ENCODE measurements at regions of chr1 and their contacts with region 1.

Region 1: DNA sequence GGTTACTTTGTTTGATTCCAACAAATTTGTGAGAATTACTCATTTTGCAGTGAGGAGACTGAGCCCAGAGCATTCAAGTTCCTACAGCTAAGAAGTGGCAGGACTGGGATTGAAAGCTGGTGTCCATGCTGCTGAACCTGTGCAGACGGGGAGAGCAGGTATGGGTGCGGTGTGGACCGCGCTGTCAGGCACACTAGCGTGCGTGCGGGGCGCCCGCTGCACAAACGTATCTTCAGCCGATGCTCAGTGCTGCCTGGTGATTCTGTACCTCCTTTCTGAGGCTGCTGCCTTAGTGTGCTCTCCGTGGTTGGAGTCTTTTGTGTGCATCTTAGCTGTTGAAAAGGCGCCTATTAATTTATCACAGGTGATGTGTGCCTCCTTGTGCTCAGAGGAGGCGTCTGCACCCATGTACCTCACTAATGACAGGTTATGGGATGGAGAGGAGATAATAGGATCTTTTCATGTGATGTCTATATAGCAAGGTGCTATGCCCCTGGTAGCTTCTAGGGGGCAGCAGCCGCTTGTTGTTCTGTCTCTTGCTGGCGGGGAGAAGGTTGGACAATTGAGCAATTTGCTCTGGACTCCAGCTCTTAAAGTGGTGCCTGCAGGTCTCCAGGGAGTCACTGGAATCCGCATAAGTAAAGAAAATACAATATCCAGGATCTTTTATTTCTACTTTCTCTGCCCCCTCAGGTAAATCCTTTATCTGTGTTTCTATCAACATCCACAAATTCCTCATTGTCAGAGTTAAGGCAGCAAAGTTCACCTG is 32.5 kb downstream of the PEX14 start:
- DNase-seq: peak; percentile 58
- ATAC-seq: peak; percentile 89
- H3K4me3 Mint-ChIP-seq: no peak overlapping the region
- H3K27ac Mint-ChIP-seq: peak overlapping the region; percentile 85
- H3K4me1 Mint-ChIP-seq: peaks cover 37% of the 10 kb centered on the region
- H3K27me3 Mint-ChIP-seq: no peaks in the 10 kb centered on the region
- CTCF ChIP-seq: peak; percentile 67

Region 2: DNA sequence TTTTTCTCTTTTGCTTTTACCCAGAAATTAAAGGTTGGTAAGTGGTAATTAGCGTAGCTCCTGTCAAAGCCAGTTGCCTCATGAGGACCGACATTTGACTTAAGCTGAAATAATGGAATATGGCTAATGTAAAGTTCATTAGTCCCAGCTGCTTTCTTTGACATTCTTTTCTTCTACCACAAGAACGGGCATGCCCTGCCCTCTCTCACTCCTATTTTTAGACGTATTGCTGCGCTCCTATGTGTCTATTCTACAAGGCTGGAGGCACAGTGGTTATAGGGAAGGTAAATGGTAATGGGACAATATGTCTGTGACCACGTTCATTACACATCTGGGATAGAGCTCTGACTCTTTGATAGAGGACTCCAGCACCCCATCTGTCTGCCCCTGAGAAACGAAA is 50.6 kb before region 1 on chr1:
- CTCF ChIA-PET with region 1: interaction called, 10 read pairs
- POLR2A ChIA-PET with region 1: no interaction called
- DNase-seq: no peak
- ATAC-seq: no peak
- H3K4me3 Mint-ChIP-seq: no peak overlapping the region
- H3K27ac Mint-ChIP-seq: peak overlapping the region; percentile 70
- H3K4me1 Mint-ChIP-seq: peaks cover 3% of the 10 kb centered on the region
- H3K27me3 Mint-ChIP-seq: no peaks in the 10 kb centered on the region; the same call in 1 of the 2 replicates
- CTCF ChIP-seq: no peak

Region 3: DNA sequence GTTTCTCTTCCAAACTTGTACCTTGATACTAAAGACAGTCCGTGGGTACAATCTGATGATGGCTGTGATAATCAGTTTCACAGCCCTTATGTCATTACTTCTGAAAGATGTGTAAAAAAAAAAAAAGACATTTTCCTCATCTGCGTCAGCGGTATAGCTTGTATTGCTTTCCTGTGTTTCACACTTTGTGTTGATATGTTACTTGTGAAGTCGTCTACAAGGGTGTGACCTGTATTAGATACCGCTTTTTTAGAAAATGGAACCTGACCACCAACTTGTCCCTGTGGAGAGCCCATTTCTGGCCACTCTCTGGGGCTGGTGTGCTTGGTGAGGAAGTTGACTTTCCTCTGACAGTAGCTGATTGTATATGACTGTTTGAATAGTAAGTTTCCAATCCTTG is 17.9 kb after region 1 on chr1:
- CTCF ChIA-PET with region 1: interaction called, 33 read pairs
- POLR2A ChIA-PET with region 1: no interaction called
- DNase-seq: no peak
- ATAC-seq: no peak
- H3K4me3 Mint-ChIP-seq: no peak overlapping the region
- H3K27ac Mint-ChIP-seq: no peak overlapping the region
- H3K4me1 Mint-ChIP-seq: peaks cover 54% of the 10 kb centered on the region
- H3K27me3 Mint-ChIP-seq: no peaks in the 10 kb centered on the region
- CTCF ChIP-seq: no peak

Region 4: GRCh38 chr1:10628685-10629084 is 121.4 kb after region 1 on chr1:
- CTCF ChIA-PET with region 1: interaction called, 14 read pairs
- POLR2A ChIA-PET with region 1: no interaction called
- DNase-seq: no peak
- ATAC-seq: no peak
- H3K4me3 Mint-ChIP-seq: no peak overlapping the region
- H3K27ac Mint-ChIP-seq: no peak overlapping the region; the same call in 1 of the 2 replicates
- H3K4me1 Mint-ChIP-seq: peaks cover 29% of the 10 kb centered on the region
- H3K27me3 Mint-ChIP-seq: no peaks in the 10 kb centered on the region
- CTCF ChIP-seq: no peak

Region 5: DNA sequence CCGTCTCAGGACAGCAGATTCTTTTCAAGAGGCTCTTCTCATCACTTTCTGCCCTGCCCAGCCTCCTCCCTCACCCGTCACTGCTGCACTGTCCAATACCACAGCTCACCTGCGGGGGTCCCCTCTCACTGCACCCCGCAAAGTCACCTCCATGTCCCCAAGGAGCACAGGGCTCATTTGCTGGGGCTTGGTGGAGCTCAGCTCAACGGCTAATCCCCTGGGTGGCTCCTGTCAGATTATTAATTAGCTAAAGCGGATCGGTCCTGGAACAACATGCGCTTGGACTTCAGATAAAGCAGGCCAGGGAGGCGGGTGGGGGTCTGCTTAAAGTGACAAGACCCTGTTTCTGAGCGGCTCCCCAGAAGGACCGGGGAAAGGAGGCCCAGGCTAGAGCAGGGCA is 246.0 kb after region 1 on chr1:
- CTCF ChIA-PET with region 1: no interaction called
- POLR2A ChIA-PET with region 1: no interaction called
- DNase-seq: peak; percentile 66
- ATAC-seq: peak; percentile 85
- H3K4me3 Mint-ChIP-seq: no peak overlapping the region
- H3K27ac Mint-ChIP-seq: no peak overlapping the region
- H3K4me1 Mint-ChIP-seq: peaks cover 14% of the 10 kb centered on the region
- H3K27me3 Mint-ChIP-seq: no peaks in the 10 kb centered on the region
- CTCF ChIP-seq: peak; percentile 29; the same call in 1 of the 2 replicates

Measured in WTC11 (cell line).